H1 (cell line): ENCODE measurements at regions of chr12 and their contacts with region 1.

Region 1: GRCh38 chr12:113048716-113049127 is 7.8 kb upstream of the DTX1 start:
- DNase-seq: no peak
- H3K4me3 ChIP-seq: no peak overlapping the region
- H3K27ac ChIP-seq: no peak overlapping the region
- H3K4me1 ChIP-seq: no peaks in the 10 kb centered on the region; a peak in 2 of 7 replicates
- H3K27me3 ChIP-seq: no peaks in the 10 kb centered on the region; a peak in 2 of 7 replicates
- CTCF ChIP-seq: peak; percentile 38 to 86 (median 68)
- EP300 ChIP-seq: no peak
- POLR2A ChIP-seq: no peak
- RAD21 ChIP-seq: peak; percentile 87 to 91

Region 2: GRCh38 chr12:112616469-112617152 is 432.1 kb before region 1 on chr12:
- CTCF ChIA-PET with region 1: no interaction called
- POLR2A ChIA-PET with region 1: no interaction called
- DNase-seq: peak; percentile 41 to 65
- H3K4me3 ChIP-seq: peak overlapping the region in 3 of 4 experiments; percentile 22 to 43 (median 34); a peak in 4 of 8 replicates
- H3K27ac ChIP-seq: no peak overlapping the region
- H3K4me1 ChIP-seq: peaks cover 11 to 19% (median 12%) of the 10 kb centered on the region in 4 experiments
- H3K27me3 ChIP-seq: peaks cover 0 to 4% (median 3%) of the 10 kb centered on the region in 4 experiments; a peak in 5 of 7 replicates
- CTCF ChIP-seq: no peak
- EP300 ChIP-seq: no peak; a peak in 1 of 3 replicates
- POLR2A ChIP-seq: no peak
- RAD21 ChIP-seq: peak; percentile 15 to 24; a peak in 3 of 4 replicates

Region 3: GRCh38 chr12:113019041-113019440 is 29.7 kb before region 1 on chr12:
- CTCF ChIA-PET with region 1: interaction called, 11 read pairs
- POLR2A ChIA-PET with region 1: no interaction called
- DNase-seq: no peak
- H3K4me3 ChIP-seq: no peak overlapping the region
- H3K27ac ChIP-seq: no peak overlapping the region
- H3K4me1 ChIP-seq: no peaks in the 10 kb centered on the region
- H3K27me3 ChIP-seq: no peaks in the 10 kb centered on the region; a peak in 1 of 7 replicates
- CTCF ChIP-seq: no peak
- EP300 ChIP-seq: no peak
- POLR2A ChIP-seq: no peak
- RAD21 ChIP-seq: no peak

Region 4: GRCh38 chr12:113065126-113066007 is 16.6 kb after region 1 on chr12:
- CTCF ChIA-PET with region 1: interaction called, 96 read pairs
- POLR2A ChIA-PET with region 1: no interaction called
- DNase-seq: peak in 1 of 2 experiments; percentile 91
- H3K4me3 ChIP-seq: peak overlapping the region in 3 of 4 experiments; percentile 8 to 52 (median 19); a peak in 5 of 8 replicates
- H3K27ac ChIP-seq: no peak overlapping the region
- H3K4me1 ChIP-seq: peaks cover 0 to 27% (median 15%) of the 10 kb centered on the region in 4 experiments; a peak in 6 of 7 replicates
- H3K27me3 ChIP-seq: peaks cover 0 to 2% (median 0%) of the 10 kb centered on the region in 4 experiments; a peak in 3 of 7 replicates
- CTCF ChIP-seq: no peak
- EP300 ChIP-seq: no peak
- POLR2A ChIP-seq: no peak
- RAD21 ChIP-seq: no peak

Region 5: GRCh38 chr12:113098446-113098896 is 49.7 kb after region 1 on chr12:
- CTCF ChIA-PET with region 1: interaction called, 139 read pairs
- POLR2A ChIA-PET with region 1: no interaction called
- DNase-seq: peak; percentile 78 to 97
- H3K4me3 ChIP-seq: no peak overlapping the region
- H3K27ac ChIP-seq: no peak overlapping the region
- H3K4me1 ChIP-seq: peaks cover 0 to 11% (median 5%) of the 10 kb centered on the region in 4 experiments; a peak in 5 of 7 replicates
- H3K27me3 ChIP-seq: no peaks in the 10 kb centered on the region
- CTCF ChIP-seq: peak; percentile 95 to 97 (median 96)
- EP300 ChIP-seq: no peak
- POLR2A ChIP-seq: no peak
- RAD21 ChIP-seq: peak; percentile 96 to 97

Region 6: GRCh38 chr12:113135178-113136127 is 86.7 kb after region 1 on chr12 and contains the start of gene RASAL1:
- CTCF ChIA-PET with region 1: interaction called, 14 read pairs
- POLR2A ChIA-PET with region 1: interaction called, 3 read pairs
- DNase-seq: peak; percentile 70 to 99
- H3K4me3 ChIP-seq: peak within 1 kb of the TSS; percentile 39 to 62 (median 50)
- H3K27ac ChIP-seq: no peak within 1 kb of the TSS
- H3K4me1 ChIP-seq: peaks cover 0 to 13% (median 9%) of the 10 kb centered on the region in 4 experiments; a peak in 6 of 7 replicates
- H3K27me3 ChIP-seq: peaks cover 0 to 13% (median 6%) of the 10 kb centered on the region in 4 experiments; a peak in 5 of 7 replicates
- CTCF ChIP-seq: peak; percentile 64 to 86 (median 84)
- EP300 ChIP-seq: no peak
- POLR2A ChIP-seq: 0 out of 3 replicates have a peak, but pooled peaks of 1 of the 2 experiments have one; percentile 25
- RAD21 ChIP-seq: peak in 1 of 2 experiments; percentile 39; a peak in 2 of 4 replicates
- total RNA-seq, gene RASAL1: 5.0 and 6.4 TPM in 2 replicates

Region 7: GRCh38 chr12:113174461-113175384 is 126.0 kb after region 1 on chr12:
- CTCF ChIA-PET with region 1: interaction called, 19 read pairs
- POLR2A ChIA-PET with region 1: no interaction called
- DNase-seq: peak in 1 of 2 experiments; percentile 96
- H3K4me3 ChIP-seq: no peak overlapping the region
- H3K27ac ChIP-seq: no peak overlapping the region
- H3K4me1 ChIP-seq: no peaks in the 10 kb centered on the region
- H3K27me3 ChIP-seq: no peaks in the 10 kb centered on the region
- CTCF ChIP-seq: peak; percentile 88 to 97 (median 95)
- EP300 ChIP-seq: no peak
- POLR2A ChIP-seq: no peak
- RAD21 ChIP-seq: peak; percentile 86 to 89

Region 8: DNA sequence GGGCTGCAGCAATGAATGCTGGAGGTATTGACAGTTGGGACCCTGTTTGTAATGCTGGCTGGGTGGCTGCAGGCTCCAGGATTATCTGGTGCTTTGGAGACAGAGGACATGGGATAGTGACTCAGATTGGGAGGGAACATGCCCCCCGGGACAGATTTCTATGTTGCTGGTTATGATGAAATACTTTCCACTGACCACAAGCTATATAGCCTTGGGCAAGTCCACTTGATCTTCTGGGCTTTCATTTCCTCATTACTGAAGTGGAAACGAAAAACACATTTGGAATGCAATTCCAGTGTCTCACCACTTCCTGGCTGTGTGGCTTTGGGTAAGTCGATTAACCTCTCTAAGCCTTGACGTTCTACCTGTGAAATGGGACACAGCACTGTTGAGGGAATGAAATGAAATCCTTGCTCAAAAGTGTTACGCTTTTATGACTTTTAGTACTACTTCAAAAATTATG is 166.2 kb after region 1 on chr12:
- CTCF ChIA-PET with region 1: no interaction called
- POLR2A ChIA-PET with region 1: no interaction called
- DNase-seq: no peak
- H3K4me3 ChIP-seq: no peak overlapping the region
- H3K27ac ChIP-seq: no peak overlapping the region
- H3K4me1 ChIP-seq: no peaks in the 10 kb centered on the region
- H3K27me3 ChIP-seq: no peaks in the 10 kb centered on the region
- CTCF ChIP-seq: no peak
- EP300 ChIP-seq: no peak
- POLR2A ChIP-seq: no peak
- RAD21 ChIP-seq: no peak